ENCODE measurements at regions of chr7 and their contacts with region 1.

Region 1: DNA sequence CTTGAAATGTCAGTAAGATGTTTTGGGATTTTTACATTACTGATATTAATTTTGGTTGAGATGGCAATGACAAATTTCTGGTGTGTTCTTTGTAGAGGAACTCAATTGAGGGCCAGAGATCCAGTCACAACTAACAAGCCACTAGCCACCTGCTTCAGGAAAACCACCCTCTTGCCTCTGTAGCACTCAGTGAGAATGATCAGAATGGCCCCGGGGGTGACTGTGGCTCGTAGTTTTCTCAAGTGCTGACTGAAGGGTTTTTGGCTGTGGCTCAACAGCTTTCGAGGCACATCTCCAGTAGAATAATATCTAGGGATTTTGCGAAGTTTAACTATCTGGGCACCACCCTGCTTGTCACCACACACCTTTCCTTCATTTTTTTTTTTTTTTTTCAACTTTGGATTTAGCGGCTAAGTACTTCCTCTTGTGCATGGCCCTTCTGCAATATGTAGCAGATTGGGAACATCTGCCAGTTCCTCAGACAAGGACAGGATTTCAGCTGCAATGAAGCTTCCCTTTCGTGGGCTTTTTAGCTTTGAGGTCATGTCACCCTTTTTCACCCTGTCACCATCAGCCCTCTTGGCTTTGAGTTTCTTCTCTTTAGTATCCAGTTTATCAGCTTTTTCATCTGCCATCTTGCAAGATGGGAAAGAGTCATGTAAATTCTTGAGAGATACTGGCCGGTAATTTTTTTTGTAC is 81.4 kb upstream of the ETV1 start:
- DNase-seq: no peak
- H3K4me3 ChIP-seq: no peak overlapping the region
- CTCF ChIP-seq: no peak
- POLR2A ChIP-seq: no peak

Region 2: GRCh38 chr7:14039195-14039594 is 31.7 kb before region 1 on chr7:
- intact Hi-C with region 1: no loop called
- DNase-seq: no peak
- H3K4me3 ChIP-seq: no peak overlapping the region
- CTCF ChIP-seq: no peak
- POLR2A ChIP-seq: no peak

Region 3: DNA sequence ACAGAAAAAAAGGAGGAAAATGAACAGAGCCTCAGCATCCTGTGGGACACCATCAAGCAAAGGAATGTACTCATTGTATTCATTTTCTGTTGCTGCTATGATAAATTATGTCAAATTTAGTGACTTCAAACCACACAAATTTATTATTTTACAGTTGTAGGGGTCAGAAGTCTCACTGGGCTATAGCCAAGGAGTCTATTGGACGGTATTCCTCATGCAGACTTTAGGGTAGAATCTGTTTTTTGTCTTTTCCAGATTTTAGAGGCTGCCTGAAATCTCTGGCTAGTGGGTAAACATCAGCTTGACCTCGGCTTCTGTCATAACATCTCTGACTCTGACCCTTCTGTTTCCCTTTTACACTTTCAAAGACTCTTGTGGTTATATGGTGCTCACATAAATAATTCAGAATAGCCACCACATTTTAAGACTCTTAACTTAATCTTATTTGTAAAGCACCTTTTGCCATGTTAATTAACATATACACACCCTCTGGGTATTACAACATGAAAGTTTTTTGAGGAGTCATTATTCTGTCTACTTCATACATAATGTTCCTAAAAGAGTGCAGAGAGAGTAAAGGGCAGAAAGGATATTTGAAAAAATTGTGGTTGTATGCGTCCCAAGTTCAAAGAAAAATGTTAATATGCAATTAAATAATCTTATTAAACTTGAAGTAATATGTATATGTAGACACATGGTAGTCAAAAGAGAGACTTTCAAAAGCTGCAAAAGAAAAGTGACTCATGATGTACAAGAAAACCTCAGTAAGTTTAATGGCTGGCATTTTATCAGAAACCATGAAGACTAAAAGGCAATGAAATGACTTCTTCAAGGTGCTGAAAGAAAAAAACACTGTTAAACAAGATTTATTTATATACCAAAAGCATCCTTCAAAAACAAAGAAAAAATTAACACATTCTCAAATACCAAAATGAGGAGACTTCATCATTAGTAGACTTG is 1686.4 kb after region 1 on chr7:
- intact Hi-C with region 1: loop called (anchors 5 kb)
- DNase-seq: no peak
- H3K4me3 ChIP-seq: no peak overlapping the region
- CTCF ChIP-seq: no peak
- POLR2A ChIP-seq: no peak